Activated CD8-positive, alpha-beta T cell treated with anti-CD3 and anti-CD28 coated beads for 36 hours (primary cell): ENCODE measurements at regions of chrX and their contacts with region 1.

Region 1: GRCh38 chrX:71622576-71623450 is 4.5 kb upstream of the CXCR3 start:
- DNase-seq: peak; percentile 88
- ATAC-seq: peak; percentile 63
- H3K4me3 Mint-ChIP-seq: peak overlapping the region; percentile 67
- H3K27ac Mint-ChIP-seq: peak overlapping the region; percentile 89
- H3K4me1 Mint-ChIP-seq: peaks cover 56% of the 10 kb centered on the region
- H3K27me3 Mint-ChIP-seq: no peaks in the 10 kb centered on the region
- CTCF ChIP-seq: no peak

Region 2: DNA sequence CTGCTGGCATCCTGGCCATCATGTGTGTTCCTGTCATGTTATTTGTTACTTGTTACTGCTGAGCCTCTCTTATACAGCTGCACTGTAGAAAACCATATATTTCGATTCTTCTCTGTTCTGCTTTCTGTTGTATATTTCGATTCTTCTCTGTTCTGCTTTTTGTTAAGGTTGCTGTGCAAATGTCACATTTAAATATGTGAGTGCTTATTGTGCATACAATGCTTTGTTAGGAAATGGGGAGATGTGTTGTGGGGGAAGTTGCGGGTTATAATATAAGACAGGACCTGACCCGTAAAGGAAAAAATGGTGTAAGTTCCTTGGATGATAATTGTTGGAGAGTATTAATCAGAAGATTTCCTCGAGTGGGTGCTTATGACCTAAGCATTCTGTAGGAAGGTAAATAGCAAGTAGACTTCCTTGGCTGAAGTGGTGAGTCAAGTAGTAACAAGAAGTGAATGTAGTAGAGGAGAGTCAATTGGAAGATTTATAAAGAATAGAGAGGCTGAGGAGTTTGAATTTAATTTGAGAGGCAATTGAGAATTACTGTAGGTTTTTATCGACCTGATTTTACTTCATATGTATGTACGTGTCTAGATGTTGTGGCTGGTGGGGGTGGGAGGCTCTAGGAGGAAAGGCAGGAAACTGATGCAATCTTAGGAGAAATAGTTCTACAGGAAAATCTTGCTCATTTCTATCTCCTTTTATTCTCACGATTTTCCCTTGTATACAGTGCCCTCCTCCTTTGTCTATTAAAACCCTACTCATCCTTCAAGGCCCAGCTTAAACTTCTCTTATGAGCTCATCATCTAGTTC is 81.4 kb before region 1 on chrX:
- CTCF ChIA-PET with region 1: no interaction called
- POLR2A ChIA-PET with region 1: interaction called, 16 read pairs
- intact Hi-C with region 1: loop called (anchors 5 kb)
- DNase-seq: peak; percentile 44
- ATAC-seq: peak; percentile 55
- H3K4me3 Mint-ChIP-seq: peak overlapping the region; percentile 98
- H3K27ac Mint-ChIP-seq: peak overlapping the region; percentile 89
- H3K4me1 Mint-ChIP-seq: peaks cover 50% of the 10 kb centered on the region
- H3K27me3 Mint-ChIP-seq: no peaks in the 10 kb centered on the region
- CTCF ChIP-seq: no peak

Region 3: GRCh38 chrX:71637848-71638247 is 15.0 kb after region 1 on chrX:
- CTCF ChIA-PET with region 1: interaction called, 3 read pairs
- POLR2A ChIA-PET with region 1: interaction called, 30 read pairs
- intact Hi-C with region 1: no loop called
- DNase-seq: peak; percentile 16
- ATAC-seq: peak; percentile 34
- H3K4me3 Mint-ChIP-seq: no peak overlapping the region
- H3K27ac Mint-ChIP-seq: no peak overlapping the region
- H3K4me1 Mint-ChIP-seq: peaks cover 26% of the 10 kb centered on the region
- H3K27me3 Mint-ChIP-seq: no peaks in the 10 kb centered on the region
- CTCF ChIP-seq: no peak

Region 4: GRCh38 chrX:71652405-71652804 is 29.6 kb after region 1 on chrX:
- CTCF ChIA-PET with region 1: interaction called, 28 read pairs
- POLR2A ChIA-PET with region 1: interaction called, 4 read pairs
- intact Hi-C with region 1: loop called (anchors 5 kb)
- DNase-seq: peak; percentile 74
- ATAC-seq: peak; percentile 70
- H3K4me3 Mint-ChIP-seq: no peak overlapping the region
- H3K27ac Mint-ChIP-seq: peak overlapping the region; percentile 49
- H3K4me1 Mint-ChIP-seq: peaks cover 29% of the 10 kb centered on the region
- H3K27me3 Mint-ChIP-seq: no peaks in the 10 kb centered on the region
- CTCF ChIP-seq: peak; percentile 42

Region 5: GRCh38 chrX:71895607-71896006 is 272.8 kb after region 1 on chrX:
- CTCF ChIA-PET with region 1: no interaction called
- POLR2A ChIA-PET with region 1: no interaction called
- intact Hi-C with region 1: no loop called
- DNase-seq: no peak
- ATAC-seq: no peak
- H3K4me3 Mint-ChIP-seq: no peak overlapping the region
- H3K27ac Mint-ChIP-seq: no peak overlapping the region
- H3K4me1 Mint-ChIP-seq: no peaks in the 10 kb centered on the region
- H3K27me3 Mint-ChIP-seq: peaks cover 1% of the 10 kb centered on the region
- CTCF ChIP-seq: no peak